Posterior vena cava (tissue), 2 donors: ENCODE measurements at regions of chr12 and their contacts with region 1.

Region 1: GRCh38 chr12:60863421-60863820 is 1267.6 kb downstream of the SLC16A7 start:
- DNase-seq: no peak

Region 2: GRCh38 chr12:60822580-60822979 is 40.8 kb before region 1 on chr12:
- intact Hi-C with region 1: no loop called
- DNase-seq: no peak

Region 3: GRCh38 chr12:60879894-60880293 is 16.5 kb after region 1 on chr12:
- intact Hi-C with region 1: loop called in 1 of 2 experiments (anchors 2 kb)
- DNase-seq: no peak